T-cell (primary cell): ENCODE measurements at regions of chr5 and their contacts with region 1.

Region 1: DNA sequence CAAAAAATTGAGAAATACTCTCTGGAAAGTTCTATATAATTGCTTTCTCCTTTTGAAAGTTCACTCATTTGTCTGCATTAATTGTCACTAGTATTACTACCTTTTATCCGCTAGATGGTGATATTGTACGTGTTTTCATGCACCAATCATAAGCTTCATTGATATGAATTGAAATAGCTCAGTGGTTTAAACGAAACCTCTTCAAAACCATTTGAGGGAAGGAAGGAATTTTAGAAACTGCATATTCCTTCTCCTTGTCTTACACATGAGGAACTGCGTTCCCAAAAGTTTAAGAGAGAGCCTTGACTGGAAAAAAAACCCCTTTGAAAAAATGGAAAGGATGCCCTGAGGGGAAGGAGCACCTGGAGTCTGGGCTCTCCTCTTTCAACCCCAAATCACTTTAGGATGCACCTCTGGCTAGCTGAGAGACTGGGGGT is 98.6 kb downstream of the YTHDC2 start:
- DNase-seq: peak in 1 of 35 experiments; percentile 59
- ATAC-seq: peak; percentile 55 to 65 (median 61)
- H3K4me3 ChIP-seq: no peak overlapping the region
- H3K4me3 Mint-ChIP-seq: no peak overlapping the region
- H3K27ac ChIP-seq: no peak overlapping the region
- H3K27ac Mint-ChIP-seq: no peak overlapping the region
- H3K4me1 ChIP-seq: no peaks in the 10 kb centered on the region
- H3K4me1 Mint-ChIP-seq: peaks cover 2 to 5% (median 4%) of the 10 kb centered on the region in 3 donors
- H3K27me3 ChIP-seq: peaks cover 0 to 2% of the 10 kb centered on the region in 2 experiments
- H3K27me3 Mint-ChIP-seq: peaks cover 6 to 16% of the 10 kb centered on the region in 2 donors

Region 2: GRCh38 chr5:113330533-113331208 is 281.4 kb before region 1 on chr5:
- CTCF ChIA-PET with region 1: interaction called, 4 to 17 read pairs
- POLR2A ChIA-PET with region 1: no interaction called
- DNase-seq: peak in 10 of 35 experiments; percentile 4 to 77 (median 16)
- ATAC-seq: peak; percentile 78 to 88 (median 87)
- H3K4me3 ChIP-seq: no peak overlapping the region
- H3K4me3 Mint-ChIP-seq: no peak overlapping the region
- H3K27ac ChIP-seq: no peak overlapping the region
- H3K27ac Mint-ChIP-seq: peak overlapping the region in 1 of 2 donors; percentile 19
- H3K4me1 ChIP-seq: peaks cover 4% of the 10 kb centered on the region in 2 experiments
- H3K4me1 Mint-ChIP-seq: peaks cover 16 to 19% (median 18%) of the 10 kb centered on the region in 3 donors
- H3K27me3 ChIP-seq: no peaks in the 10 kb centered on the region
- H3K27me3 Mint-ChIP-seq: no peaks in the 10 kb centered on the region

Region 3: DNA sequence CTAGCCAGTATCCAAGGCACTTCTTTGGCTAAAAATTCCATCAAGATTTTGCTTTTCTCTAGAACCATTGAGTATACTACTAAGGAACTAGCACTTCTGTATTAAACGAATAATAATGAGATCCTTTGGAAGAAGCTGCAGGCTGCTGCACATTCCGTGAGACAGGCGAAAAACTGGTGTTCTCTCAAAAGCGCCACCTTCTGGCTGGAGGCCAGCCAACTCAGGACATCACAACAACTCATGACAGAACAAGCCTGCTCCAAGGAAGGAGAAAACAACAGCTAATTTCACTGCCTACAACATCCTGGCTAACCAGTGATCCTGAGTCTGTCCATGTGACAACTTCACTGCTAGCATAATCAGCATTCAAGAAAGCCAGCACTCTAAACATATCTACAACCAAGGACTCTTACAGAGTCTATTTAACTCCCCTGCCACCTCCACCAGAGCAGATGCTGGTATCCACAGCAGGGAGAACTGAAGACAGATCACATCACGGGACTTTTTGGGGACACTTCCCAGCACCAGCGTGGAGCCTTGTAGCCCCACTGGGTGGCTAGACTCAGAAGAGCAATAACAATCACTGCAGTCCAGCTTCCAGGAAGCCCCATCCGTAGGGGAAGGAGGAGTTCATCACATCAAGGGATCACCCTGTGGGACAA is 51.9 kb after region 1 on chr5:
- CTCF ChIA-PET with region 1: interaction called in 1 of 2 experiments, 13 read pairs
- POLR2A ChIA-PET with region 1: no interaction called
- DNase-seq: peak in 17 of 35 experiments; percentile 1 to 44 (median 6)
- ATAC-seq: no peak
- H3K4me3 ChIP-seq: no peak overlapping the region
- H3K4me3 Mint-ChIP-seq: no peak overlapping the region
- H3K27ac ChIP-seq: no peak overlapping the region
- H3K27ac Mint-ChIP-seq: no peak overlapping the region
- H3K4me1 ChIP-seq: no peaks in the 10 kb centered on the region
- H3K4me1 Mint-ChIP-seq: no peaks in the 10 kb centered on the region
- H3K27me3 ChIP-seq: peaks cover 0 to 3% of the 10 kb centered on the region in 2 experiments
- H3K27me3 Mint-ChIP-seq: peaks cover 35% of the 10 kb centered on the region in 2 donors

Region 4: GRCh38 chr5:113694576-113694975 is 82.5 kb after region 1 on chr5:
- CTCF ChIA-PET with region 1: no interaction called
- POLR2A ChIA-PET with region 1: no interaction called
- DNase-seq: no peak
- ATAC-seq: no peak
- H3K4me3 ChIP-seq: no peak overlapping the region
- H3K4me3 Mint-ChIP-seq: no peak overlapping the region
- H3K27ac ChIP-seq: no peak overlapping the region
- H3K27ac Mint-ChIP-seq: no peak overlapping the region
- H3K4me1 ChIP-seq: no peaks in the 10 kb centered on the region
- H3K4me1 Mint-ChIP-seq: no peaks in the 10 kb centered on the region
- H3K27me3 ChIP-seq: peaks cover 2 to 9% of the 10 kb centered on the region in 2 experiments
- H3K27me3 Mint-ChIP-seq: peaks cover 39 to 42% of the 10 kb centered on the region in 2 donors

Region 5: DNA sequence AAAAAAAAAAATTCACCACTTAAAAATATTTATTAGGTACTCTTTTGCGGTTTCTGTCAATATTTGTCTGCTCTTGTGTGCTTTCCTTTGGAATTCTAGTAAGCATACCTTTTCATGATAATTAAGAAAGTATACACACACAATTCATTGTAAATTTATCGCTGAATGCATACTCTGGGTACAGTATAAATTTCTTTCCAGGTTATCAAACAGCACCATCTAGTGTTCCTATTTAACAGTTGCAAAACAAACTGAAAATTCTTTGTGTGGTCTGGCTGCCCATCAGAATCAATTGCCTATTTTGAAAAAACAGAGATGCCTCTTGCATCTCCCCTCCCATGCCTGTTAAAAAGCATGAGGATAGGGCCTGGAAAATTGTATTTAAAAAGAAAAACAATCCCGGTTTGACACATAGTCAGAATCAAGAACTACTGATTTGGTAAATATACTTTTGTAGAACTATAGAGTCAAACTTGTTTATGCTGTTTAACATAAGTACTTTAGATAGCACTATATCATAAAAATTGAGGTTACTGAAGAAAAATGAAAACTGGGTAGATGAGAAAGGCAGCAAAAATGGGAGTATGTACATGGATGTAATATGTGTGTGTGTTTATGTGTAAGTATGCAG is 1634.4 kb after region 1 on chr5:
- CTCF ChIA-PET with region 1: interaction called, 3 to 13 read pairs
- POLR2A ChIA-PET with region 1: no interaction called
- DNase-seq: peak in 1 of 35 experiments; percentile 59
- ATAC-seq: peak in 3 of 4 experiments; percentile 44 to 61 (median 59)
- H3K4me3 ChIP-seq: no peak overlapping the region
- H3K4me3 Mint-ChIP-seq: no peak overlapping the region
- H3K27ac ChIP-seq: no peak overlapping the region
- H3K27ac Mint-ChIP-seq: no peak overlapping the region
- H3K4me1 ChIP-seq: no peaks in the 10 kb centered on the region
- H3K4me1 Mint-ChIP-seq: peaks cover 21 to 27% (median 24%) of the 10 kb centered on the region in 3 donors
- H3K27me3 ChIP-seq: no peaks in the 10 kb centered on the region
- H3K27me3 Mint-ChIP-seq: no peaks in the 10 kb centered on the region